Sigmoid colon (tissue), 7 donors: ENCODE measurements at regions of chr6 and their contacts with region 1.

Region 1: DNA sequence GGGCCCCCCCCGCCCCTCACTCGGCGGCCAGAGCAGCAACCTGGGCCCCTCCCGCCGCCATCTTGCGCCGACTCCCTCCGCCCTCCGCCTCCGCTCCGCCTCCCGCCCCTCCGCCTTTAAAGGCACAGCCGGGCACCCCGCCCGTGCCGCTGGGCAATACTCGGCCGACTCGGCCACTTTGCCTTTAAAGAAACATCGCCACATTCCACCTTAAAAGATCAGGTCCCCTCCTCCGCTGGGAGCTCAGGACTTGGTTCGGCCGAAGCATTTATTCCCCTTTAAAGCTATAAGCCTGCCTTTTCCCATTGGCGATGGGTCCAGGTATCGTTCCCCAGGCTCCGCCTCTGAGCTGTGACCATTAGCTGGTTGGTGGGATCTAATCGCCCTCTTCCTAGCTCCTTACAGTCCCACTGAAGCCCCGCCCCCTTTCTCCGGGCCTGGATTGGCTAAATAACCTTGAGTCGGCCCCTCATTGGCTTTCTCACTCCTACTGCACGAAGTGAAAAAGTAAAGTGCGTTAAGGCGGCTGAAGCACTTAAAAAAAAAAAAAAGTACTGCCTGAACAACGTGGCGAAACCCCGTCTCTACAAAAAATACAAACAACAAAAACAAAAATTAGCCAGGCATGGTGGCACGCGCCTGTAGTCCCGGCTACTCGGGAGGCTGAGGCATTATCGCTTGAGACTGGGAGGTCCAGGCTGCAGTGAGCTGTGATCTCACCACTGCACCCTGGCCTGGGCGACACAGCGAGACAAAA is at the start of gene ZBTB22:
- DNase-seq: peak; percentile 100
- H3K4me3 ChIP-seq: peak within 1 kb of the TSS; percentile 43 to 59 (median 54)
- H3K27ac ChIP-seq: peak within 1 kb of the TSS; percentile 84 to 87 (median 84)
- H3K4me1 ChIP-seq: peaks cover 0 to 78% (median 62%) of the 10 kb centered on the region in 4 donors
- H3K27me3 ChIP-seq: no peaks in the 10 kb centered on the region
- CTCF ChIP-seq: no peak
- EP300 ChIP-seq: no peak
- POLR2A ChIP-seq: no peak
- total RNA-seq, gene ZBTB22: 9.4 to 13.2 (median 12.7) TPM

Region 2: GRCh38 chr6:33425668-33426577 is 108.1 kb after region 1 on chr6:
- intact Hi-C with region 1: loop called (anchors 5 kb)
- DNase-seq: peak; percentile 95
- H3K4me3 ChIP-seq: peak overlapping the region; percentile 35 to 64 (median 54)
- H3K27ac ChIP-seq: peak overlapping the region; percentile 87 to 93 (median 91)
- H3K4me1 ChIP-seq: peaks cover 0 to 59% (median 55%) of the 10 kb centered on the region in 4 donors
- H3K27me3 ChIP-seq: no peaks in the 10 kb centered on the region
- CTCF ChIP-seq: peak in 2 of 4 experiments; percentile 44 to 65
- EP300 ChIP-seq: peak in 1 of 4 donors; percentile 46
- POLR2A ChIP-seq: peak in 1 of 2 donors; percentile 26

Region 3: GRCh38 chr6:33467091-33467490 is 149.2 kb after region 1 on chr6:
- intact Hi-C with region 1: no loop called
- DNase-seq: no peak
- H3K4me3 ChIP-seq: no peak overlapping the region
- H3K27ac ChIP-seq: no peak overlapping the region
- H3K4me1 ChIP-seq: no peaks in the 10 kb centered on the region
- H3K27me3 ChIP-seq: no peaks in the 10 kb centered on the region
- CTCF ChIP-seq: no peak
- EP300 ChIP-seq: no peak
- POLR2A ChIP-seq: no peak

Region 4: GRCh38 chr6:33505548-33506370 is 187.9 kb after region 1 on chr6:
- intact Hi-C with region 1: no loop called
- DNase-seq: no peak
- H3K4me3 ChIP-seq: no peak overlapping the region
- H3K27ac ChIP-seq: no peak overlapping the region
- H3K4me1 ChIP-seq: no peaks in the 10 kb centered on the region
- H3K27me3 ChIP-seq: peaks cover 0 to 10% (median 0%) of the 10 kb centered on the region in 3 donors
- CTCF ChIP-seq: no peak
- EP300 ChIP-seq: no peak
- POLR2A ChIP-seq: no peak